ENCODE measurements at regions of chrX and their contacts with region 1.

Region 1: GRCh38 chrX:119516157-119516702 is 48.0 kb downstream of the SLC25A5 start:
- DNase-seq: peak; percentile 39
- ATAC-seq: peak; percentile 95
- H3K4me3 ChIP-seq: no peak overlapping the region
- H3K27ac ChIP-seq: no peak overlapping the region
- H3K4me1 ChIP-seq: no peaks in the 10 kb centered on the region; the same call in 1 of the 2 replicates
- H3K27me3 ChIP-seq: no peaks in the 10 kb centered on the region
- CTCF ChIP-seq: peak; percentile 91 to 99 (median 93); a peak in 5 of 6 replicates
- EP300 ChIP-seq: no peak
- POLR2A ChIP-seq: no peak
- RAD21 ChIP-seq: peak; percentile 92

Region 2: GRCh38 chrX:119391279-119391678 is 125.0 kb before region 1 on chrX:
- CTCF ChIA-PET with region 1: interaction called, 4 read pairs
- POLR2A ChIA-PET with region 1: no interaction called
- RAD21 ChIA-PET with region 1: no interaction called
- SMC1A ChIA-PET with region 1: interaction called, 3 read pairs
- in situ Hi-C with region 1: no loop called
- intact Hi-C with region 1: loop called (anchors 1 kb)
- DNase-seq: no peak
- ATAC-seq: peak; percentile 81
- H3K4me3 ChIP-seq: no peak overlapping the region
- H3K27ac ChIP-seq: no peak overlapping the region
- H3K4me1 ChIP-seq: no peaks in the 10 kb centered on the region
- H3K27me3 ChIP-seq: no peaks in the 10 kb centered on the region
- CTCF ChIP-seq: peak; percentile 29 to 37 (median 35); a peak in 3 of 6 replicates
- EP300 ChIP-seq: no peak
- POLR2A ChIP-seq: no peak
- RAD21 ChIP-seq: peak; percentile 30

Region 3: DNA sequence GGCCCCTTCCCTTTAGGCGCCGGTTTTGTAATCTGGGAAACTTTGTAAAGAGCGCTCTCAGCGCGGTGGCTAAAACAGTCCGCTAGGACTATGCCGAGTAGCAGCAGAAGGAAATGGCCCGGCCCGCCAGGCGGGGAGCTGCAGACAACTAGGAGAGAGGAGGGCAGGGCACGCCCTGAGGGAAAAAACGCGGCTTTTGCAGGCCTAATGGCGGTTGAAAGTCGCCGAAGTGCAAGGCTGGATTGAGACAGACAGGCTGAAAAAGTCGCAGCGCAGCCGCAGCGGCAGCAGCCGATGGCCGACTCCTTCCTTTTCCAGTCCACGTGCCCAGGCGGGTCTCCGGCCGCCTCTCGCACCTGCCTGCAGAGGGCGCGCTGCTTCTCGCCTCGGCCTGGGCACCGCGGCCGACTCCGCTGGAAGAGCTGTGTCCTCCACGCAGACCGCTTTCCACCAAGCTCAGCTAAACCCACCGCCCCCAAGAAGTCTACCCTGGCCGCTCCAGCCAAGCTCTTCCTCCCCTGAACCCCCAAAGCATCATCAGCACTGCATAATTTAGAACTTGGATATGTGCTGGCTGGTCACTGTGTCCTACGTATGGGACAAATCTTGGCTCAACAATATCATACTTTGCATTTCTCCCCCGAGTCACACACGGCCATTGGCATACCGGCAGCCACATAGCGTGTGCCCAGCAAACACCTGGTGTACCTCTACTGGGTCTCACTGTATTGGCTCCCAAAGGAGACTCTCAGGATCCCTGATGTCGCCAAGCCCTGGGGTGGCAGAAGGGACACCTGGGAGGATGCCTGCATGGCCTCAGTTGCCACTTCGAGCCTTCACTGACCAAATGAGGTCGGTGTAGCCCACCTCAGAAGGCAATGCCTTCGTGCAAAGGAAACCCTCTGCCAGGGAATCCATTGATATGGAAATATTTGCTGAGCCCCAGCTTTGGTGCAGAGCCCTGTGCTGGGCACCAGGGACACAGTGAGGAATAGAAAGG is 33.4 kb before region 1 on chrX:
- CTCF ChIA-PET with region 1: interaction called, 59 read pairs
- POLR2A ChIA-PET with region 1: no interaction called
- RAD21 ChIA-PET with region 1: interaction called, 16 read pairs
- SMC1A ChIA-PET with region 1: interaction called, 8 read pairs
- in situ Hi-C with region 1: no loop called
- intact Hi-C with region 1: no loop called
- DNase-seq: no peak
- ATAC-seq: peak; percentile 90
- H3K4me3 ChIP-seq: no peak overlapping the region; the same call in 1 of the 2 replicates
- H3K27ac ChIP-seq: no peak overlapping the region
- H3K4me1 ChIP-seq: no peaks in the 10 kb centered on the region; the same call in 1 of the 2 replicates
- H3K27me3 ChIP-seq: no peaks in the 10 kb centered on the region
- CTCF ChIP-seq: peak; percentile 50 to 60 (median 59)
- EP300 ChIP-seq: no peak
- POLR2A ChIP-seq: peak; percentile 39; the same call in 1 of the 2 replicates
- RAD21 ChIP-seq: no peak

Region 4: GRCh38 chrX:119574394-119575266 is 58.4 kb after region 1 on chrX and contains the start of gene UBE2A:
- CTCF ChIA-PET with region 1: interaction called, 16 read pairs
- POLR2A ChIA-PET with region 1: interaction called, 3 read pairs
- RAD21 ChIA-PET with region 1: interaction called, 9 read pairs
- SMC1A ChIA-PET with region 1: no interaction called
- in situ Hi-C with region 1: no loop called
- intact Hi-C with region 1: loop called (anchors 2 kb)
- DNase-seq: peak; percentile 53
- ATAC-seq: peak; percentile 89
- H3K4me3 ChIP-seq: peak within 1 kb of the TSS; percentile 76
- H3K27ac ChIP-seq: peak within 1 kb of the TSS; percentile 55
- H3K4me1 ChIP-seq: no peaks in the 10 kb centered on the region; the same call in 1 of the 2 replicates
- H3K27me3 ChIP-seq: no peaks in the 10 kb centered on the region
- CTCF ChIP-seq: peak; percentile 24 to 40 (median 32); a peak in 2 of 6 replicates
- EP300 ChIP-seq: no peak
- POLR2A ChIP-seq: peak; percentile 99
- RAD21 ChIP-seq: 0 out of 2 replicates have a peak, but pooled peaks have one; percentile 12
- polyA plus RNA-seq, gene UBE2A: 20.8 to 37.1 TPM

Region 5: DNA sequence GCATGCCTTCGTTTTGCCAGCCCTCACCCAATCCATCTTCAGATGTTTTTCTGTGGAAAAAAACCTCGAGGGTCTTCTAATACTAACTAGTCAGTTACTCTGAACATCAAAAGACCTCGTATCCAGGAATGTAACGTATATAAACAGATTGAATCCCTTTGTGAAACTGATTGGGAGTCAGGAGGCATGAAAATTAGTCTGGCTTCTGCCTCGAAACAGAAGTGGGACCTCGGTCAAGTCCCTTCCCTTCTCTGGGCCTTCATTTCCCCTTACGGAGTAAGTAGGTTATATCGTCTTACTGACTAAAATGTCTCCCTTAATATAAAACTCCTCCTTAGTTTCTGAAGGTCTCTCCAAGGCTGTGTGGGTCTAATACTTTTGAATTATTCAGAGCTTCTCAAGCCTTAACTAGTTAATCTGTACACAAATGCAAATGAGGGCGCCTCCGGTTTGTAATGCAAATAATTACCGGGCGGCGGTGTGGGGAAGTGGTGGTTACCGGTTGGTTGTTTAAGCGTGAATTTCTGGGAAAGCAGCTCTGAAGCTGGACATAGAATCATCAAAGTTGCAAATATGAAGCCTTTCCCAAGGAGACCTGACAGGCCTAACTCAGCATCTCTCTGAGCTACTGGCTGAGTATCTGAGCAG is 101.4 kb after region 1 on chrX:
- CTCF ChIA-PET with region 1: interaction called, 7 read pairs
- POLR2A ChIA-PET with region 1: no interaction called
- RAD21 ChIA-PET with region 1: interaction called, 4 read pairs
- SMC1A ChIA-PET with region 1: interaction called, 5 read pairs
- in situ Hi-C with region 1: no loop called
- intact Hi-C with region 1: loop called (anchors 2 kb)
- DNase-seq: no peak
- ATAC-seq: peak; percentile 76
- H3K4me3 ChIP-seq: peak overlapping the region; percentile 29; the same call in 1 of the 2 replicates
- H3K27ac ChIP-seq: peak overlapping the region; percentile 54
- H3K4me1 ChIP-seq: peaks cover 30% of the 10 kb centered on the region
- H3K27me3 ChIP-seq: no peaks in the 10 kb centered on the region
- CTCF ChIP-seq: no peak
- EP300 ChIP-seq: no peak
- POLR2A ChIP-seq: 0 out of 2 replicates have a peak, but pooled peaks have one; percentile 4
- RAD21 ChIP-seq: no peak

Region 6: GRCh38 chrX:119775517-119776238 is 259.4 kb after region 1 on chrX:
- CTCF ChIA-PET with region 1: interaction called, 18 read pairs
- POLR2A ChIA-PET with region 1: no interaction called
- RAD21 ChIA-PET with region 1: interaction called, 6 read pairs
- SMC1A ChIA-PET with region 1: interaction called, 5 read pairs
- in situ Hi-C with region 1: loop called (anchors 5 kb)
- intact Hi-C with region 1: loop called (anchors 1 kb)
- DNase-seq: no peak
- ATAC-seq: peak; percentile 69
- H3K4me3 ChIP-seq: no peak overlapping the region
- H3K27ac ChIP-seq: peak overlapping the region; percentile 83
- H3K4me1 ChIP-seq: peaks cover 5% of the 10 kb centered on the region
- H3K27me3 ChIP-seq: no peaks in the 10 kb centered on the region
- CTCF ChIP-seq: no peak
- EP300 ChIP-seq: no peak
- POLR2A ChIP-seq: 0 out of 2 replicates have a peak, but pooled peaks have one; percentile 38
- RAD21 ChIP-seq: no peak

Region 7: DNA sequence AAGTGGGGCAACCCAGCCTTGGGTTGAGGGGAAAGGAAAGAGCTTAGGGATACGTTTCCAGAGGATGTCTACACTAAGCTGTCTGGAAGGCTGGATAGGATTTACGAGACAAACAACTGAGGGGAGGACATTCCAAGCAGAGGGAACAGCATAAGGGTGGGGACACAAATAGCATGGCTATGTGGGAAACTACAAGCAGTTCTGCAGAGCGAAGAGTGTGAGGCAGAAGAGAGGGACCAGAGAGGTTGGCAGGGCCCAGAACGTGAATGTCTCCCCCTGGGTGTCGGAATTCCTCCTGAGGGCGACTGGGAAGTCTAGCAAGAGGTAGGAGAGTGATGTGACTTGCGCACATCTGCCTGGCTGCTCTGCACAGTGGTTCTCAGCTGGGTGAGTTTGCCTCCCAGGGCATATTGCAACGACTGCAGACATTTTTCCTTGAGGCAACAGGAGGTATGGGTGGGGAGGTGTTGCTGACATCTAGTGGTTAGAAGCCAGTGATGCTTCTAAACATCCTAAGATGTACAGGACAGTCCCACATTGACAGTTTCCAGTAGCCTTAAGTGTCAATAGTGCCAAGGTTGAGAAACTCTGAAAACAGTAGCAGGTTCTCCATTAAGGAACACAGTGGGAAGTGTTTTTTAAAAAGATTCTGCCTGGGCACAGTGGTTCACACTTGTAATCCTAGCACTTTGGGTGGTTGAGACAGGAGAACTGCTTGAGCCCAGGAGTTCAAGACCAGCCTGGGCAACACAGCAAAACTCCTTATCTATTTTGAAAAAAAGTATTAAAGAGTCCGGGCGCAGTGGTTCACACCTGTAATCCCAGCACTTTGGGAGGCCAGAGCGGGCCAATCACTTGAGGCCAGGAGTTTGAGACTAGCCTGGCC is 364.6 kb after region 1 on chrX:
- CTCF ChIA-PET with region 1: interaction called, 6 read pairs
- POLR2A ChIA-PET with region 1: no interaction called
- RAD21 ChIA-PET with region 1: no interaction called
- SMC1A ChIA-PET with region 1: interaction called, 3 read pairs
- in situ Hi-C with region 1: no loop called
- intact Hi-C with region 1: loop called (anchors 1 kb)
- DNase-seq: peak; percentile 35
- ATAC-seq: peak; percentile 98
- H3K4me3 ChIP-seq: no peak overlapping the region
- H3K27ac ChIP-seq: no peak overlapping the region
- H3K4me1 ChIP-seq: peaks cover 10% of the 10 kb centered on the region
- H3K27me3 ChIP-seq: no peaks in the 10 kb centered on the region
- CTCF ChIP-seq: peak; percentile 76 to 82 (median 77)
- EP300 ChIP-seq: no peak
- POLR2A ChIP-seq: no peak
- RAD21 ChIP-seq: peak; percentile 76

Measured in GM12878 (cell line).